HEK293T (cell line): ENCODE measurements at regions of chr1 and their contacts with region 1.

Region 1: GRCh38 chr1:117059678-117060440 is at the start of gene TTF2:
- DNase-seq: peak; percentile 98

Region 2: GRCh38 chr1:116737020-116737854 is 322.6 kb before region 1 on chr1:
- CTCF ChIA-PET with region 1: interaction called, 8 read pairs
- POLR2A ChIA-PET with region 1: interaction called, 13 read pairs
- DNase-seq: peak; percentile 79

Region 3: GRCh38 chr1:116853670-116854402 is 206.0 kb before region 1 on chr1:
- CTCF ChIA-PET with region 1: no interaction called
- POLR2A ChIA-PET with region 1: interaction called, 16 read pairs
- DNase-seq: peak; percentile 71

Region 4: GRCh38 chr1:117045644-117046043 is 14.2 kb before region 1 on chr1:
- CTCF ChIA-PET with region 1: no interaction called
- POLR2A ChIA-PET with region 1: interaction called, 11 read pairs
- DNase-seq: no peak

Region 5: DNA sequence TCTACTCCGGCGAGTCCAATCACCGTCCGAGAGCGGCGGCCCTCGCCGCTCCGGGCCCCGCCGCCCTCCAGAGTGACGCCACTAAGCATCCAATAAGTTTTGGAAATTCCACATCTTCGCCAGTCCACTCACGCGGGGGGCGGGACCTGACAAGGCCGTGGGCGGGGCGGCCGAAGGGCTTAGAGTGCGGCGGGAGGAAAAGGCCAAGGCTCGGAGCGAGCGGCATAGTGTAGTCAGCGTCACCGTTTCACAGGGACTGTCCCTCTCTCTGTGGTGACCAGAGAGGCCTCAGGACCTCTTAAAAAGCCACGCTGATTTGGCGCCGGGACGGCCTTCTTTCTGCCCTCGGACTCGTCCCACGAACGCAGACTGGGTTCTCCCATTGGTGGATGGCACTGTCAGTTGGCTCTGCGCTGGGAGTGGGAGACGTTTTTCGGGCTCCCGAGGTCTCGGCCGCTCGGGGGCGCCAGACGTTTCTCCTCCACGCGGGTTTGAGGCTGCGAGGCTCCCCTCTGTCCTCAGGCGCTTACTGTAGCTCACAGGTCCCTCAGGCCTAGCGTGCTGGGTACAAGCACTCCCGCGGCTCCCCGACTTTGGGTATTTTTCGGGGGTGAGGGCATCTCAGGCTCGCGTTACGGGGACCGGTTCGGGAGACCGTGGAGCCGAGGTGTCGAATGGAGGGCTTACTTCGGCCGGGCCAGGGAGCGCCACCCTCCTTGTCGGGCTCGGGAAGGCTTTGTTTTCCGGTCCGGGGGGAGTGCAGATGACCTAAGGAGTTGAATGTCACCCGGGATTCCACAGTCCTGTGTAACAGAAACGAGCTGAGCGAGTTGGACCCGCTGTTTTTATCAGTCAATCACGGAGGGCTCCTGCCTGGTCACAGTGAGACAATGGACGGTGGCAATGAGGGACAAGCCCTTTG is 62.2 kb after region 1 on chr1:
- CTCF ChIA-PET with region 1: no interaction called
- POLR2A ChIA-PET with region 1: interaction called, 12 read pairs
- DNase-seq: peak; percentile 96